AG04449 (cell line): ENCODE measurements at regions of chr1 and their contacts with region 1.

Region 1: DNA sequence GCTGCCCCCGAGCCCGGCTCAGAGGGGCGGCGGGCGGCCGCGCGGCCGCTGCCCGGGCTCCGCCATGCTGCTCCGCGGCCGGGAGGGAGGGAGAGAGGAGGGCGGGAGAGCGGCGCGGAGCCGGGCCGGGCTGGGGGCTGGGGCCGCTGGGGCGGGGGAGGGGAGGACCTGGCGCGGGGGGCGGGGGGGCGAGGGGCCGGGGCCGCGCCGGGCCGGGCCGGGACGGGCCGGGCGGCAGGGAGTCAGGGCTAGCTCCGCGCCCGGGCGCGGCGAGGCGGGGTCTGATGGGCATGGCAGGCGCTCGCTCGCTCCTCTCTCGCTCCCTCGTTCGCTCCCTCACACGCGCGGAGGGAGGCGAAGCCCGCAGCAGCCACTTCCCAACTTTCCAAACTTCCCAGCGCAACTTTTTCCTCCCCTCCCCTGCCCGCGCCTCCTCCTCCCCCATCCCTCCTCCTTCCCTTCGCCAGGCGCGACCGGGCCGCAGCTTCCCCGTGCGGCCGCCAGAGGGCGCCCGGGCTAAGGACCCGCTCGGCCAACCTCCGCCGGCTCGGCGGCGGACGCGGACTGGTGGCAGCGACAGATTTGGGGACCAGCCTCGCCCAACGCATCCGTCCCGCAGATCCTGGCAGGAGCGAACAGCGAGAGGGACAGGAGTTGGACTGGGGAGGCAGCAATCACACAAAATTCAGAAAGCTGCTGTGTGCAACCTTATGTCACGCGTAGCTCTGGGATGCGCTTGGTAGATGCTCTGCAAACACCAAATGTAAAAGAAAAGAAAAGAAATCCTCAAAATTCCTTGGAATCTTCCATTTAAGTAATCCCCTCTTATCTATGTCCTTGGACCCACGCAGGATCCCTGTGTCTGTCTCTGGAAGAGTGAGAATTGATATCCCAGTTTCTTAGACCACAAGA is at the start of gene TRABD2B:
- DNase-seq: no peak
- H3K4me3 ChIP-seq: peak within 1 kb of the TSS; percentile 57
- CTCF ChIP-seq: peak; percentile 94

Region 2: GRCh38 chr1:47809301-47810084 is 188.1 kb before region 1 on chr1:
- CTCF ChIA-PET with region 1: no interaction called
- POLR2A ChIA-PET with region 1: no interaction called
- DNase-seq: no peak
- H3K4me3 ChIP-seq: no peak overlapping the region
- CTCF ChIP-seq: no peak

Region 3: GRCh38 chr1:47986761-47987200 is 10.8 kb before region 1 on chr1:
- CTCF ChIA-PET with region 1: interaction called, 12 read pairs
- POLR2A ChIA-PET with region 1: no interaction called
- DNase-seq: no peak
- H3K4me3 ChIP-seq: no peak overlapping the region
- CTCF ChIP-seq: no peak

Region 4: DNA sequence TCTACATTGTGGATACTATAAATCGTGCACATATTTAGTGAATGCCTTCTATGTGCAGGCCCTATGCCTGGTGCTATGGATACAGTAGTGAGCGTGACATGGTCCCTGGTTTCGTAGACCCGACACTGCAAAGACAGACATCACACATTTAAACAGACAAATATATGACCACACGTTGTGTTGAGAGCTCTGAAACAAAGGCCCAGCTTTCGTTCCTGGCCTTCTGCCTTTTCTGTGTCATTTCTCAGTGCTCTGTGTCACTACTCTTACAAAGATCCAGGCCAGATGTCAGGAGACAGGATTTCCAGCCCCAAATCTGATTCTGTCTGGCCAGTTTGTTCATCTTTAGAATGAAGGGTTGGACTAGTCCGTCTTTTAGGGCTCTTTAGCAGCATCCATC is 19.0 kb after region 1 on chr1:
- CTCF ChIA-PET with region 1: interaction called, 10 read pairs
- POLR2A ChIA-PET with region 1: no interaction called
- DNase-seq: no peak
- H3K4me3 ChIP-seq: no peak overlapping the region
- CTCF ChIP-seq: no peak

Region 5: DNA sequence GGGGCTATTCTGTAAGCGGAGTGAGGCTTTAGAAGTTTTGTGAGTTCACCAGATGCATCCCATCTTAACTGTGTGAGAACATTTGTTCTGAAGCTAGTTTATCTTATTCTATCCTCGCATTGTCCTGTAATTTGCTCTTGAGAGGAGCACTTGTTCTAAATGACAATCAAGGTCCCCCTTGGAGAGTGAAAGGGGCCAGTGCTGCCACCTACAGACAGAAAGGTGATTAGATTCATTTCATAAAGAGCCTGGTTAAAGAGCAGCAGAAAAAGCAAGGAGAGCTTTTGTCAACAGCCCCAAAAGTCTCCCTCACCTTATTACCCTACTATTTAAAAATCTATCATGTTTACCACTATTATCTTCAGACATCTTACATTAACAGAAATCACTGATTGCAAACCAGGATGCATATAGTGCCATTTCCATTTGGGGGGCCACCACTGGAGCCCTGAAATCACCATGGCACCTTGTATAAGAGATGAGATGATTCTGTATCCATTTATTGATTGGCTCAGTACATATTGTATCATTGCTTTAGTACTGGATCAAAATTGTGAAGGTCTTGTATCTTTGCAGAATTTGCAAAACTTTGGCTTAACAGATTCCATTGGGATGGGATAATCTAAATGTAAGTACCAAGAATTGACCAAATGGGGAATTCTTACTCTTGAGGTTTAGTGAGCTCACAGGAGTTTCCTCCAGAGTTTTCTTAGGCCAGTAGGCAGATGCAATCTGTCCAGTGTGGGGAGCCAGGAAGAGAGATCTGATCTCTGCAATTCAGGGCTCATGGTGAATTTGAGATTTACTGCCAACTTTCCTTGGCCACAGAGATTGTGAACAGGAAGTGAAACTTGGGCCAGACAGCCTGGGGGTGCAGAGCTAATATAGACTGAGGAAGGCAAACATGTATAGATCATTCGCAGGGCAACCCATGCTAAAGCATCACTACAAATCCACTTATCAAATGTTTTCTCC is 63.9 kb after region 1 on chr1:
- CTCF ChIA-PET with region 1: interaction called, 21 read pairs
- POLR2A ChIA-PET with region 1: no interaction called
- DNase-seq: no peak
- H3K4me3 ChIP-seq: no peak overlapping the region
- CTCF ChIP-seq: peak; percentile 33